GM18951 (cell line): ENCODE measurements at regions of chrX and their contacts with region 1.

Region 1: GRCh38 chrX:110442640-110443039 is 84.0 kb downstream of the RTL9 start:
- POLR2A ChIP-seq: no peak

Region 2: GRCh38 chrX:110853610-110854009 is 411.0 kb after region 1 on chrX:
- in situ Hi-C with region 1: loop called (anchors 10 kb)
- POLR2A ChIP-seq: no peak